AG04450 (cell line): ENCODE measurements at regions of chr3 and their contacts with region 1.

Region 1: DNA sequence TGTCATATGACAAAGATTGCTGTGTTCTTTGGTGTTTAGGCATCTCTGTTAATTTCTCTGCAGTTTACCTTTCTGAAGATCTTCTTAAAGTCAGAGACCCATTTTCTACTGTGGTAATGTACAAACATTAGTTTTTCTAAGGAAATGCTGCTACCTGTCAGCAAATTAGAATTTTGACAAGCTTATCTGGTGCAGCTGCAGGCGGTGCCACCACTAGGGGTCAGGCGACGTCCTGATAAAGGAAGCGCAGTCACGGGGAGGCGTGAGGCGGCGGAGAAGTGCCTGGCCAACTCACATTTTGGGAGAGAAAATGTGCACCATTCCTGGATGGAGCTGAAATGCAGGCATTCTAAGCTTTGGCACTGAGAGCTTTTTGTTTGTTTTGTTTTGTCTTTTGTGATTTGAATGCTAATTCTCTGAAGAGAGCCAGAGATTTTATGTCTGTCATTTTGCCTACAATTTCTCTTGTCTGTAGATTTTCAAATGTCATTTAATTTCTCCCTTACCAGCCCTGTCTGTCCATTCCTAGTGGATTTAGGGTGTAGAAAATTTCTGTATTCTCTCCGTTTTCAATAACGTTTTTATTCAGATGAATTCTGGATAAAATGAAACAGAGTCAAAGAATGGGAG is 24.9 kb upstream of the SIAH2 start:
- DNase-seq: no peak
- H3K4me3 ChIP-seq: no peak overlapping the region
- H3K27ac ChIP-seq: no peak overlapping the region
- H3K27me3 ChIP-seq: peaks cover 8% of the 10 kb centered on the region
- CTCF ChIP-seq: peak; percentile 93

Region 2: DNA sequence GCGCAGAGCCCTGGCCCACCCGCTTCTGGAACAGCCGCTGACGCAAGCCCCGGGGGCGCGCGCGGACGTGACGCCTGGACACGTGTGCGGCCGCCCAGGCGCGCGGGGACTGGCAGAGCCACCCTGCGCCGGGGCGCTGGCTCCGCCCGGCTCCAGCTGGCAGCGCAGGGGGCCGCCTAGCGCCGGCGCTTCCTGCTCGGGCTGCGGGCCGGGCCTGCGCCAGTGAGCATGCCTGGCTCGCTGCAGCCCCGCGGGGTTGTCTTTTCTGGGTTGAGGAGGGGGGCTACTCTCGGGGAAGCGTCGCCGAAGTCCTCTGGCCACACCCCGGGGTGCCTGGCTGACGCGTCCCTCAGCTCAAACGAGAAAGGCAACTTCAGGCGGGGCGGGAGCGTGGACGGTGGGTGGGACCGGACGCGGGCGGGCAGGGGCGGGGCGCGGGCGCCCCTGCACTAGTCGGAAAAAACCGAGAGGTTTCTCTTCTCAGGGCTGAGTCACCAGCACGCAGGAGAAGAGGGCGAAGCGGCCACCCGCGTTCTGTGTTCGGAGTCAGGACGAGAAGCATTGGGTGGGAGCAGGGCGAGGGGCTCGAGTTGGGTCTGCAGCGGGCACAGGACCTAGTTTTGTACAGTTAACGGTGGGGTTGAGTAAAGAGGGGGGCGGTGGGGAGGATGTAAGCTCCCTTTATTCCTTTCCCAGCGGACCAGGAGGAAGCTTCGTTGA is 24.6 kb before region 1 on chr3 and contains the start of gene SIAH2:
- CTCF ChIA-PET with region 1: interaction called, 31 read pairs
- POLR2A ChIA-PET with region 1: interaction called, 3 read pairs
- DNase-seq: peak; percentile 85
- H3K4me3 ChIP-seq: peak within 1 kb of the TSS; percentile 95
- H3K27ac ChIP-seq: peak within 1 kb of the TSS; percentile 97
- H3K27me3 ChIP-seq: no peaks in the 10 kb centered on the region
- CTCF ChIP-seq: no peak
- polyA plus RNA-seq, gene SIAH2: 31.1 and 36.2 TPM in 2 replicates

Region 3: DNA sequence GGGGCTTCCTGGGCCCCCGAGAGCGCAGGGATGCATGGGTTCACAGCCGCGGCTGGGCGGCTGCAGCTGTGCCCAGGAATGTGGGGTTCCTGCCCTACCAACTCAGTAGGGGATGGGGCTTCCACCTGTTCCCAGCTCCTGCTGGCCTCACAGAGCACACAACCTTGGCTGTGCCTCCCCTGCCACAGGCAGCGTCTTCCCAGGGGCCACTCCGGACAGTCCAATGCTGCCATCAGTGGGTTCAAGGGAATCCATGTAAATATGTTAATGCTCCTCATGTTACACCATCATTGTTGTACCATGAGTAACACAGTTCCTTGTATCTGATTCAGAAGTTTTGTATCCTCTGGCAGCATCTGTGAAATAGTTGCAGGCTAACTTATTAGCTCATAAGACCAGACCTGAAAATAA is 12.8 kb before region 1 on chr3:
- CTCF ChIA-PET with region 1: interaction called, 38 read pairs
- POLR2A ChIA-PET with region 1: no interaction called
- DNase-seq: peak; percentile 43
- H3K4me3 ChIP-seq: no peak overlapping the region
- H3K27ac ChIP-seq: no peak overlapping the region
- H3K27me3 ChIP-seq: no peaks in the 10 kb centered on the region
- CTCF ChIP-seq: no peak

Region 4: GRCh38 chr3:150800722-150801121 is 12.9 kb after region 1 on chr3:
- CTCF ChIA-PET with region 1: interaction called, 13 read pairs
- POLR2A ChIA-PET with region 1: no interaction called
- DNase-seq: no peak
- H3K4me3 ChIP-seq: no peak overlapping the region
- H3K27ac ChIP-seq: no peak overlapping the region
- H3K27me3 ChIP-seq: peaks cover 15% of the 10 kb centered on the region
- CTCF ChIP-seq: no peak

Region 5: DNA sequence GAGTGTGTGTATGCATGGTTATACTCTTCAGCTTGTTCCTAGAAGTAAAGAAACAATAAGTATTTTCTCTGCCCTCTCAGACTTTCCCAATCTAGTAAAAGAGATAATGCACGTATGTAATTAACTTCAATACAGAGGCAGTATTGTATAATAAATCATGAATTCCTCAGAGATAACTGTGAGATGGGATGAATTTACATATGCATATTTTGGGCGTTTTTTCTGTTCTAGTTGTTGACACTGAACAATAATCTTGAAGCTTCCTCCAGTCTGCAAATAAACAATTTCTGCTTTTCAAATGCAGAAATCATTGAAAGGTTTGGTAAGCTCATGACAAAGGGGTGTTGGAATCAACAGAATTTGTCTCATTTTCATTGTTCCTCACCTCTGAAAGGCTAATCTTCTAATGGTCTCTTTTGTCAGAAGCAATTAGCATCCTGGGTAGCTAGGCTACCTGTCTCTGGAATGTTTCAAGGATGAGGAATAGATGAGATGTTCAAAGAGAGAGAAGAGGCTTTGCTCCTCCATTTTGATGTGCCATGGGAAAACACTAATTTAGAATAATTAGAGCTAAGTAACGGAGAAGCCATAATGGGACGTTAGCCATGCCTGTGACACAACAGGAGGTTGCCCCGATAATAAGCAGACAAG is 18.5 kb after region 1 on chr3:
- CTCF ChIA-PET with region 1: interaction called, 13 read pairs
- POLR2A ChIA-PET with region 1: no interaction called
- DNase-seq: no peak
- H3K4me3 ChIP-seq: no peak overlapping the region
- H3K27ac ChIP-seq: no peak overlapping the region
- H3K27me3 ChIP-seq: peaks cover 31% of the 10 kb centered on the region
- CTCF ChIP-seq: no peak

Region 6: GRCh38 chr3:150870396-150870795 is 82.5 kb after region 1 on chr3:
- CTCF ChIA-PET with region 1: interaction called, 22 read pairs
- POLR2A ChIA-PET with region 1: no interaction called
- DNase-seq: no peak
- H3K4me3 ChIP-seq: no peak overlapping the region
- H3K27ac ChIP-seq: no peak overlapping the region
- H3K27me3 ChIP-seq: peaks cover 4% of the 10 kb centered on the region
- CTCF ChIP-seq: no peak

Region 7: GRCh38 chr3:151146071-151146730 is 358.3 kb after region 1 on chr3:
- CTCF ChIA-PET with region 1: interaction called, 20 read pairs
- POLR2A ChIA-PET with region 1: no interaction called
- DNase-seq: peak; percentile 36
- H3K4me3 ChIP-seq: no peak overlapping the region
- H3K27ac ChIP-seq: no peak overlapping the region
- H3K27me3 ChIP-seq: peaks cover 5% of the 10 kb centered on the region
- CTCF ChIP-seq: peak; percentile 94